Transverse colon (tissue), 4 donors: ENCODE measurements at regions of chr14 and their contacts with region 1.

Region 1: DNA sequence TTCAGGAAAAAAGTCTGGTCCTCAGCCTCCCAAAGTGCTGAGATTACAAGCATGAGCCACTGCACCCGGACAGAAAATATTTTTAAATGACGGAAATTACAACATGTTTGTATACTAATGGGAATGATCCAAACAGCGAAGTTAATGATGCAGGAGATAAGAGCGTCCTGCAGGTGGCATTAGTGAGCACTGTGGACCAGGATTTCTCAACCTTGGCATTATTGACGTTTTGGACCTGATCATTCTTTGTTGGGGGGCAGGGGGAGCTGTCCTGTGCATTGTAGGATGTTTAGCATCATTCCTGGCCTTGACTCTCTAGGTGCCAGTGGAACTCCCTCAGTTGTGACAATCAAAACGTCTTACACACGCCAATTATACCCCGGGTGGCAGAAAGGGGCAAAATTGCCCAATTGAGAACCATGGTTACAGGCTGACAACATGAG is 34.1 kb downstream of the SCFD1 start:
- DNase-seq: peak; percentile 25
- H3K4me3 ChIP-seq: no peak overlapping the region
- H3K27ac ChIP-seq: peak overlapping the region in 1 of 4 donors; percentile 36
- H3K4me1 ChIP-seq: peaks cover 0 to 13% (median 0%) of the 10 kb centered on the region in 4 donors
- H3K27me3 ChIP-seq: no peaks in the 10 kb centered on the region
- CTCF ChIP-seq: peak; percentile 54 to 76 (median 67)
- EP300 ChIP-seq: no peak
- POLR2A ChIP-seq: no peak

Region 2: DNA sequence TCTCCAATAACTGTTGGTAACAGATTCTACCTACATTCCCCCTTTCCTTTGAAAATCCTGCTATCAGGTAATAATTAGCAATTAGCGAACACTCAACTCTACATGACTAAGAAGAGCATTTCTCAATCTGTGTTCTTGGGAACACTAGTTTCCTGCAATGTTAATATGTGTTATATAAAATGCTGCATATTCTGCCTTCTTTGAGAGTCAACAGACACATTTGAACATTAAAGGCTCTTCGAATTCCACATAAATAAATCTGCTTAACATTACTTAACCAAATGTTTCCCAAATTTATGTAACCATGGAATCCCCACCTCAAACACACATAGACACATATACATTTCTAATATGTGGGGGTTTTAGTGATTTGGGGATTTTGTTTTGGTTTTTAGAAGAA is 138.5 kb before region 1 on chr14:
- in situ Hi-C with region 1: no loop called
- intact Hi-C with region 1: no loop called
- DNase-seq: no peak
- H3K4me3 ChIP-seq: no peak overlapping the region
- H3K27ac ChIP-seq: no peak overlapping the region
- H3K4me1 ChIP-seq: no peaks in the 10 kb centered on the region
- H3K27me3 ChIP-seq: no peaks in the 10 kb centered on the region
- CTCF ChIP-seq: no peak
- EP300 ChIP-seq: no peak
- POLR2A ChIP-seq: no peak

Region 3: DNA sequence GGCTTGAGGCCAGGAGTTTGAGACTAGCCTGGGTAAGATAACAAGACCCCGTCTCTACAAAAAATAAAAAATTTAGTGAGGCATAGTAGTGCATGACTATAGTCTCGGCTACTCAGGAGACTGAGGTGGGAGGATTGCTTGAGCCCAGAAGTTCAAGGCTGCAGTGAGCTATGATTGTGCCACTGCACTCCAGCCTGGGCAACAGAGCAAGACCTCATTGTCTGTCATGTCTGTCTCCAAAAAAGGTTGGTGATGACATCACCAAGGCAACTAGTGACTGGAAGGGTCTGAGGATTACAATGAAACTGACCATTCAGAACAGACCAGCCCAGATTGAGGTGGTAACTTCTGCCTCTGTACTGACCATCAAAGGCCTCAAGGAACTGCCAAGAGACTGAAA is 134.7 kb after region 1 on chr14:
- in situ Hi-C with region 1: no loop called
- intact Hi-C with region 1: no loop called
- DNase-seq: no peak
- H3K4me3 ChIP-seq: no peak overlapping the region
- H3K27ac ChIP-seq: no peak overlapping the region
- H3K4me1 ChIP-seq: no peaks in the 10 kb centered on the region
- H3K27me3 ChIP-seq: no peaks in the 10 kb centered on the region
- CTCF ChIP-seq: no peak
- EP300 ChIP-seq: no peak
- POLR2A ChIP-seq: no peak

Region 4: DNA sequence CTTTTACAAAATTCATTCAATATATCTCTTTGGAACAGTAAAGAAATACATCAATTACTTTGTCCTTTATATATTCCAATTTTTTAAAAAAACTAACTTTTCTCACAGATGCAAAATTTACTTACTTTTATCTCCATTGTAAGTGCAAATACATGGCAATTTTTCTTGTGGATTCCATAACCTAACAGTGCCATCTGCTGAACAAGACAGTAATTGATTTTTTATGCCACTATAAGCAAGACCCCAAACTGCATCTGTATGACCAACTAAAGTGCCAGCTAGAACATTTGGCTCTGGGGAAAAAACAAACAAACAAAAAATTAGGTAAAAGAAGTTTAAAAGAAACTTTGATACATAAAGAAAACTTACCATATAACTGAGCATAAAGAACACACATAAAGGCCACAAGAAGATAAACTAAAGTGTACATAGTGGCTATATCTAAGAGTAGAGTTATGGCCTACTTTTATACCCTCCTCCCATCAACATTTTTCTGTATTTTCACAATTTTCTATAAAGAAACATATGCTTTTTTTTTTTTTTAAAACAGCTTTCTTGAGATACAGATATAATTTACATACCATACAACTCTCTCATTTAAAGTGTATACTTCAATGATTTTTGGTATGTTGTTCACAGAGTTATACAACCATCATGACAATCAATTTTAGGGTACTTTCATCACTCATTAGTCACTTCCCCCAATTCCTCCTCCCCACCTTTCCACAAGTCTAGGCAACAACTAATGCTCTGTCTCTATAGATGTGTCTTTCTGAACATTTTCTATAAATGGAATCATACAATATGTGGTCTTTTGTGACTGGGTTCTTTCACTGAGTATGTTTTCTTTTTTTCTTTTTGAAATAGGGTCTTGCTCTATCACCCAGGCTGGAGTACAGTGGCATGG is 250.8 kb after region 1 on chr14:
- in situ Hi-C with region 1: loop called in 3 of 4 experiments (anchors 10 to 25 kb)
- intact Hi-C with region 1: no loop called
- DNase-seq: no peak
- H3K4me3 ChIP-seq: no peak overlapping the region
- H3K27ac ChIP-seq: no peak overlapping the region
- H3K4me1 ChIP-seq: no peaks in the 10 kb centered on the region
- H3K27me3 ChIP-seq: no peaks in the 10 kb centered on the region
- CTCF ChIP-seq: peak; percentile 15 to 39 (median 31)
- EP300 ChIP-seq: no peak
- POLR2A ChIP-seq: no peak

Region 5: GRCh38 chr14:31038521-31039166 is 382.4 kb after region 1 on chr14:
- in situ Hi-C with region 1: no loop called
- intact Hi-C with region 1: no loop called
- DNase-seq: no peak
- H3K4me3 ChIP-seq: no peak overlapping the region
- H3K27ac ChIP-seq: no peak overlapping the region
- H3K4me1 ChIP-seq: peaks cover 0 to 5% (median under 1%) of the 10 kb centered on the region in 4 donors
- H3K27me3 ChIP-seq: no peaks in the 10 kb centered on the region
- CTCF ChIP-seq: no peak
- EP300 ChIP-seq: no peak
- POLR2A ChIP-seq: no peak